Gastrocnemius medialis (tissue), 4 donors: ENCODE measurements at regions of chr19 and their contacts with region 1.

Region 1: GRCh38 chr19:38718747-38719543 is 25.3 kb downstream of the CAPN12 start:
- DNase-seq: peak in 1 of 2 donors; percentile 53
- ATAC-seq: peak in 1 of 2 donors; percentile 31
- H3K4me3 ChIP-seq: no peak overlapping the region
- H3K27ac ChIP-seq: peak overlapping the region; percentile 51 to 78 (median 60)
- H3K4me1 ChIP-seq: peaks cover 30 to 31% of the 10 kb centered on the region in 2 donors
- H3K27me3 ChIP-seq: no peaks in the 10 kb centered on the region
- CTCF ChIP-seq: peak in 4 of 5 experiments; percentile 16 to 42 (median 26)
- POLR2A ChIP-seq: no peak

Region 2: DNA sequence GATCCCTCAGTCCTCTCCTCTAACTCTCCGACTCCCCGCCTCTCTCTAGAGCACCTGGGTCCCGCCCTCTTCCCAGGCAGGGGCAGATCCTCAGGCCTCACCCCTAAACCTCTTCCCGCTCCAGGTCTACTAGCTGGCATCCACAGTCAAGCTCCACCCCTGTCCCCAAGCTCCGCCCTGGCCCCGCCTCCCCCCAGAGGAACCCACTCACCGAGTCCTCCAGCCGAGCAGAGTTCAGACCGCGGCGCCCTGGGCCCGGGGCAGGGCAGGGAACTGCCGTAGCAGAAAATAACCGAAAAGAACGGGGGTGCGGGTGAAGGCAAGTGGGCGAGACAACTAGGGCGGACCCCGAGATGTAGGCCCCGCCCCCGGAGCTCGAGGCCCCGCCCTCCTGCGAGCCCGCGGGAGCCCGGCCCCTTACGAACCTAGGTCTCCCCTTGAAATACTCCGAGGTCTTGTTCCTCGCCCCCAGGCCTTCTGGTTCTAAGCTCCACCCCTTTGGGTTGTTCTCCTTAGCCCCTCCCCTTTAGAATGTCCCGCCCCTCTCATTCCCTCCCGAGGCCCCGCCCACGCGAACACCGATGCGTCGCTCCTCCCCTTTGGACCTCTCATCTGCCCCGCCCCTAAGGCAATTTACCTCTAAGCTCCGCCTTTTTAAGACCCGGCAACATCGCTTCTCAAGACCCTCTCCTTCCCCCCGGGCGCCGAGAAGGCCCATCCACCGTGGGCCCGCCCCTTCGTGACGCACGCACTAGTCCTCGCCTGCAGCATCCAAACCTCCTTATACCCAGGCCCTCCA is 331.2 kb before region 1 on chr19 and contains the start of gene GGN:
- in situ Hi-C with region 1: no loop called
- intact Hi-C with region 1: loop called (anchors 10 kb)
- DNase-seq: peak; percentile 67 to 77
- ATAC-seq: peak; percentile 61 to 62
- H3K4me3 ChIP-seq: peak within 1 kb of the TSS; percentile 33 to 63 (median 55)
- H3K27ac ChIP-seq: peak within 1 kb of the TSS; percentile 43 to 78 (median 71)
- H3K4me1 ChIP-seq: peaks cover 6 to 22% of the 10 kb centered on the region in 2 donors
- H3K27me3 ChIP-seq: peaks cover 0 to 12% (median 5%) of the 10 kb centered on the region in 3 donors
- CTCF ChIP-seq: no peak
- POLR2A ChIP-seq: peak in 1 of 2 donors; percentile 26
- total RNA-seq, gene GGN: 0.13 TPM in 1 of 4 donors, not detected in the others

Region 3: GRCh38 chr19:38917516-38918491 is 198.9 kb after region 1 on chr19:
- in situ Hi-C with region 1: no loop called
- intact Hi-C with region 1: no loop called
- DNase-seq: no peak
- ATAC-seq: no peak
- H3K4me3 ChIP-seq: no peak overlapping the region
- H3K27ac ChIP-seq: no peak overlapping the region
- H3K4me1 ChIP-seq: no peaks in the 10 kb centered on the region
- H3K27me3 ChIP-seq: no peaks in the 10 kb centered on the region
- CTCF ChIP-seq: no peak
- POLR2A ChIP-seq: no peak